ENCODE measurements at regions of chr14 and their contacts with region 1.

Region 1: DNA sequence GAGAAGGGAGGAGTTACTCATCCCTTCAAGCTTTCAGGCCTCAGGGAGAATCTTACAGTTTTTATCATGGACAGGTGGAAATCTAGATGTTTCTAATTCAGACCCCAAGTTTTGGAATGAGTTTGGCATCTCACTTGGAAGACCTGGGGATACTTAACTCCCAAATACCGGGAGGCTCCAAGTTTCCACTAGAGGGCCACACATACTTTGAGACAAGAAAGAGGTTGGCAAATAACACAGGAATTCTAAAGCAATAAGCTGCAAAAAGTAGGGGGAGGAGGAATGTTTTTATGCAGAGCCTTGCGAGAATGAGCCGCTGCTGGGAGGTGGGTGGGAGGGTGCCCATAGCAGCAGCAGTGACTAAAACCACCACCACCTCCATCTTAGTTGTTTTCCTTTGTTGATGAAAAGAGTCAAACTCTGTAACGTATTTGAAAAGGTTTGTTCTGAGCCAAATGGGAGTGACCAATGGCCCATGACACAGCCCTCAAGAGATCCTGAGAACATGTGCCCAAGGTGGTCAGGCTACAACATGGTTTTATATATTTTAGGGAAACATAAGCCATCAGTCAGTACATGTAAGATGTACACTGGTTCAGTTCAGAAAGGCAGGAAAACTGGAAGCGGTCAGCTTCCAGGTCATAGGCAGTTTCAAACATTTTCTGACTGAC is 34.2 kb upstream of the RNASE1 start:
- DNase-seq: peak; percentile 82 to 87
- ATAC-seq: peak; percentile 94 to 95
- H3K4me3 ChIP-seq: no peak overlapping the region
- H3K27ac ChIP-seq: peak overlapping the region; percentile 57 to 79
- H3K4me1 ChIP-seq: peaks cover 6% of the 10 kb centered on the region
- CTCF ChIP-seq: peak; percentile 73
- EP300 ChIP-seq: no peak
- POLR2A ChIP-seq: no peak
- RAD21 ChIP-seq: peak; percentile 83 to 84

Region 2: GRCh38 chr14:20489093-20489994 is 347.5 kb before region 1 on chr14:
- CTCF ChIA-PET with region 1: no interaction called
- POLR2A ChIA-PET with region 1: no interaction called
- DNase-seq: no peak
- ATAC-seq: 0 out of 6 replicates have a peak, but pooled peaks of 1 of the 2 experiments have one; percentile 13
- H3K4me3 ChIP-seq: no peak overlapping the region
- H3K27ac ChIP-seq: no peak overlapping the region
- H3K4me1 ChIP-seq: no peaks in the 10 kb centered on the region
- CTCF ChIP-seq: no peak
- EP300 ChIP-seq: no peak
- POLR2A ChIP-seq: no peak
- RAD21 ChIP-seq: no peak

Region 3: GRCh38 chr14:20848316-20848954 is 11.6 kb after region 1 on chr14:
- CTCF ChIA-PET with region 1: interaction called, 64 read pairs
- POLR2A ChIA-PET with region 1: interaction called, 4 read pairs
- DNase-seq: peak; percentile 84 to 94
- ATAC-seq: peak; percentile 97 to 99
- H3K4me3 ChIP-seq: peak overlapping the region; percentile 31; the same call in 2 of the 3 replicates
- H3K27ac ChIP-seq: peak overlapping the region; percentile 94 to 96
- H3K4me1 ChIP-seq: peaks cover 40% of the 10 kb centered on the region
- CTCF ChIP-seq: no peak
- EP300 ChIP-seq: peak; percentile 33 to 39; a peak in 1 of 5 replicates
- POLR2A ChIP-seq: no peak
- RAD21 ChIP-seq: 0 out of 5 replicates have a peak, but pooled peaks of 1 of the 2 experiments have one; percentile 7

Region 4: DNA sequence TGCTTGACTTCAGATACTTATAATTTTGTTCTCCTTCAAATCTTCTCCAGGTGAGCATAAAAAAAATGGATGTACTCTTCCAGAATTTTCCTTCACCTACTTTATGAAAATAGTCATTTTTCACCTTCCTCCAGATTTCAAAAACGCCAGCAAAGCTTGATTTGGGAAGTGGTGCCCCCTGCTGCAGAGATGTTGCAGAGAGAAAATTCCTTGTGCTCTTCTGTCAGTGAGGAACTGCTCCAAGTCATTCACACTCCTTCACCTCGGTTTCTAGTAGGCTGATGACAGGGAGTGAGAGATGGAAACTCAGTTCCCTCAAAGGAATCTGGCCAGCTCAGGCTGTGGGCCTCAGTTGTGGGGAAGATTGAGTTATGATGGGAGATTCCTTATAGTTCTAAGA is 30.2 kb after region 1 on chr14:
- CTCF ChIA-PET with region 1: interaction called, 13 read pairs
- POLR2A ChIA-PET with region 1: no interaction called
- DNase-seq: peak in 1 of 2 experiments; percentile 27
- ATAC-seq: peak in 1 of 2 experiments; percentile 70; a peak in 3 of 6 replicates
- H3K4me3 ChIP-seq: no peak overlapping the region
- H3K27ac ChIP-seq: no peak overlapping the region
- H3K4me1 ChIP-seq: no peaks in the 10 kb centered on the region
- CTCF ChIP-seq: peak; percentile 46
- EP300 ChIP-seq: no peak
- POLR2A ChIP-seq: no peak
- RAD21 ChIP-seq: peak; percentile 61 to 68

Region 5: GRCh38 chr14:20873370-20874177 is 36.8 kb after region 1 on chr14:
- CTCF ChIA-PET with region 1: interaction called, 13 read pairs
- POLR2A ChIA-PET with region 1: no interaction called
- DNase-seq: peak; percentile 33 to 87
- ATAC-seq: peak; percentile 96 to 99
- H3K4me3 ChIP-seq: no peak overlapping the region
- H3K27ac ChIP-seq: 0 out of 6 replicates have a peak overlapping the region, but pooled peaks of 1 of the 2 experiments have one; percentile 25
- H3K4me1 ChIP-seq: no peaks in the 10 kb centered on the region
- CTCF ChIP-seq: peak; percentile 76
- EP300 ChIP-seq: no peak
- POLR2A ChIP-seq: no peak
- RAD21 ChIP-seq: peak; percentile 79 to 87

Measured in A549 (cell line).